ENCODE measurements at regions of chr5 and their contacts with region 1.

Region 1: GRCh38 chr5:54310433-54311175 is at the start of gene ARL15:
- DNase-seq: peak; percentile 97
- H3K4me3 Mint-ChIP-seq: peak within 1 kb of the TSS; percentile 91
- H3K27ac Mint-ChIP-seq: peak within 1 kb of the TSS; percentile 90
- H3K4me1 Mint-ChIP-seq: peaks cover 26% of the 10 kb centered on the region
- H3K27me3 Mint-ChIP-seq: peaks cover 21% of the 10 kb centered on the region
- total RNA-seq, gene ARL15: 7.6 and 10.4 TPM in 2 replicates

Region 2: GRCh38 chr5:52799983-52800393 is 1510.6 kb before region 1 on chr5:
- intact Hi-C with region 1: loop called (anchors 10 kb)
- DNase-seq: peak; percentile 95
- H3K4me3 Mint-ChIP-seq: peak overlapping the region; percentile 90
- H3K27ac Mint-ChIP-seq: peak overlapping the region; percentile 88
- H3K4me1 Mint-ChIP-seq: peaks cover 58% of the 10 kb centered on the region
- H3K27me3 Mint-ChIP-seq: peaks cover 3% of the 10 kb centered on the region

Region 3: GRCh38 chr5:53481887-53482716 is 828.5 kb before region 1 on chr5:
- intact Hi-C with region 1: loop called (anchors 5 kb)
- DNase-seq: peak; percentile 60
- H3K4me3 Mint-ChIP-seq: peak overlapping the region; percentile 89
- H3K27ac Mint-ChIP-seq: peak overlapping the region; percentile 94
- H3K4me1 Mint-ChIP-seq: peaks cover 49% of the 10 kb centered on the region
- H3K27me3 Mint-ChIP-seq: peaks cover 59% of the 10 kb centered on the region

Region 4: DNA sequence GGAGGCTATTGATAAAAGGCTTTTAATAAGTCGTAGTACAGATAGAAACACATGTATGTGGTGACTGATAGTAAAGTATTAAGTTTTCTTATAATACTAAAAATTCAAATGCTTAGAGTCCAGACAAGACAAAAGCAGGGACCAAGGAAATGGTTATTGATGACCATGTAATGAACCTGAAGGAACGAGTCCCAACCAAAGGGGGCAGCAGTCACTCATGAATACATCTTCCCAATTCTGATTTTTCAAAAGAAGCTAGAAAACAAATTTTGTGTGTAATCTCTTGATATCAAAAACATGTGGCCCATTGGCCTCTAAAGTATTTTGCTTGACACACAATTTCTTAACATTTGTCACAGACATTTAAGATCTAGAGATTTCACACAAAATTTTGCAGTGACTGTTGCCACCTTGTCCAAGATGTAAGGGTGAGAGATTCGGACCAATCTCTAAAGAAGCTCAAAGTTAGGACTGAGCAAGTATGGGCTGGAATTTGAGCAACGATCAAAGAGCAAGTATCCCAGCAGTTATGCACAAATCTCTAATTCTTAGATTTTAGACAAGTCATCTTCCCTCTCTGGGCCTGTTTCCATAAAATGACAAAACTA is 67.0 kb before region 1 on chr5:
- intact Hi-C with region 1: loop called (anchors 5 kb)
- DNase-seq: no peak
- H3K4me3 Mint-ChIP-seq: no peak overlapping the region
- H3K27ac Mint-ChIP-seq: no peak overlapping the region
- H3K4me1 Mint-ChIP-seq: no peaks in the 10 kb centered on the region
- H3K27me3 Mint-ChIP-seq: peaks cover 4% of the 10 kb centered on the region

Region 5: DNA sequence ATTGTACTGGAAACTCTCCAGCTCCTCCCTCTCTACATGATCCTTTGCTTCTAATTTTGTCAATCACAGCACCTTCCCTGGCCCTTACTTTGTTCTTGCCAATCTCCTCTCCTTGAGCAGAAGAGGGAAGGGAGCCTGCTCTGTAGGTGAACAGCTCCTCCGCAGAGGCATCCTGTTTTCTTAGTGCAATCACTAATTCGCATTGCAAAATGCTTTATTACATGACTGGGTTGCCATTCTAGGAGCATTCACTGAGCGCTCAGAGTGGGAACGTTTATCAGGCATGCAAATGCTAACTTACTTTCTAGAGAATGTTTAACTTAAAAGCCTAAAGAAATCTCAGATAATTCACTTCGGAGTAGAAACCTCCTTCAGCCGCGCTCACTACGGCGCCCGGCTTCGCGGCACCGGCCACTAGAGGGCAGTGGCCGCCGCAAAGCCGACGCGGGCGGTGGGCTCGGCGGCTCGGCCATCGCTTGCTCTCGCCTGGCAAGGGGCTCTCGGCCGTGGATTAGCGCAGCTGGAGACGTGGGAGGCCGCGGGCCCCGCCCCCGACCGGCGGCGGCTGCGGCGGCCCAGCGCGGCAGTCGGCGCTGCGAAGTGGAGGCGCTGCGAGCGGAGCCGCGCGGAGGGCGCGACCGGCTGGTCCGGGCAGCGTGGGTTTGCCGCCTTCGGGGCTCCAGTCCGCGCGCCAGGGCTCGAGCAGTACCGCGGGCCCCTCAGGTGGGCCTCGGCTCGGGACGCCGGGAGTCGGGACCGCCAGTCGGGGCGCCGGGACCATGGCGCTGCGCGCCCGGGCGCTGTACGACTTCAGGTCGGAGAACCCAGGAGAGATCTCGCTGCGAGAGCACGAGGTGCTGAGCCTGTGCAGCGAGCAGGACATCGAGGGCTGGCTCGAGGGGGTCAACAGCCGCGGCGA is 206.8 kb after region 1 on chr5 and contains the start of gene SNX18:
- intact Hi-C with region 1: loop called (anchors 1 kb)
- DNase-seq: peak; percentile 90
- H3K4me3 Mint-ChIP-seq: peak within 1 kb of the TSS; percentile 86
- H3K27ac Mint-ChIP-seq: peak within 1 kb of the TSS; percentile 76
- H3K4me1 Mint-ChIP-seq: peaks cover 42% of the 10 kb centered on the region
- H3K27me3 Mint-ChIP-seq: peaks cover 20% of the 10 kb centered on the region
- total RNA-seq, gene SNX18: 25.4 and 27.9 TPM in 2 replicates

Region 6: DNA sequence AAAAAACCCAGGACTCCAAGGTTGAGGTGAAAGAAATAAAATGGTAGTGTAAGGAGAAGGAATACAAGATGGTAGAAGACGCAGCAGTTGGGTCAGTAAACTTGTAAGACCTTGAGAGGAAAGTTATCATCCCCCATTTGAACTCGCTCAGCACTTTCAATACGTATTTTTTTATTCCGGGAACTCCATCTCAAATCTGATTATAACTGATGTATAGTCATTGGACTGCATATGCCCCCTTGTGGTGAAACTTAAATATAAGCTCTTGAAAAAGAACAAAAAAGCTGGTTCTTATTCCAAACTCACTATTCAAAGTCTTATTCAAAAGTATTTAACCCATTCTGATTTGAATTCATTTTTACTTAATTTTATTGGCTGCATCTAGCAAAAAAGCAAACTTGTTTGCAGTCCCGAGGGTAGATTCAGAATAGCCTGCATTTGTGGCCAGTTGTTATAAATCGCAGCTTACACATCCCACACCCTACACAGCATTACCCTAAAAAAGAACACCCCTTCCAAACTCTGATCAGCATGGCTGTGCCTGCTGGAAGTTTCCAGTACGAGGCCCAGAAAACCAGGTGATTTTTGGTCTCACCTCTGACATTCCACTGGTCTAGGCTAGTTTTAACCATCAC is 556.8 kb after region 1 on chr5:
- intact Hi-C with region 1: loop called (anchors 2 kb)
- DNase-seq: no peak
- H3K4me3 Mint-ChIP-seq: no peak overlapping the region
- H3K27ac Mint-ChIP-seq: no peak overlapping the region
- H3K4me1 Mint-ChIP-seq: peaks cover 30% of the 10 kb centered on the region
- H3K27me3 Mint-ChIP-seq: peaks cover 67% of the 10 kb centered on the region

Region 7: GRCh38 chr5:55226027-55226933 is 915.7 kb after region 1 on chr5:
- intact Hi-C with region 1: loop called (anchors 10 kb)
- DNase-seq: no peak
- H3K4me3 Mint-ChIP-seq: peak overlapping the region; percentile 61
- H3K27ac Mint-ChIP-seq: peak overlapping the region; percentile 65
- H3K4me1 Mint-ChIP-seq: peaks cover 58% of the 10 kb centered on the region
- H3K27me3 Mint-ChIP-seq: peaks cover 87% of the 10 kb centered on the region

Region 8: DNA sequence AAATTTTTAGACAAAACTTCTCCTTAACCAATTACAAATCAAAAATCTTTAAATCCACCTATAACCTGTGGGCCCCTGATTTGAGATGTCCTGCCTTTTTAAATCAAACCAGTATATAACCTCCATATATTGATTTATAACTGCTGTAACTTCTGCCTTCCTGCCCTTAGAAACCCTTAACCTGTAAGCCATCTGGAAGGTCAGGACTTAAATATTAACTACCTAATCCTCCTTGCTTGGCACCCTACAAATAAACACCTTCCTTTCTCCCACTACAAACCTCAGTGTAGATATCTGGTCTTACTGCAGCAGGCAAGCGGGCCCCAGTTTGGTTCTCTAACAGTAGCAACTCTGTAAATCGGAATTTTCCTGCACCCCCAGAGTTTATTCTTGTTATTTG is 1081.1 kb after region 1 on chr5:
- intact Hi-C with region 1: no loop called
- DNase-seq: no peak
- H3K4me3 Mint-ChIP-seq: no peak overlapping the region
- H3K27ac Mint-ChIP-seq: no peak overlapping the region
- H3K4me1 Mint-ChIP-seq: no peaks in the 10 kb centered on the region
- H3K27me3 Mint-ChIP-seq: no peaks in the 10 kb centered on the region